Tibial artery (tissue), 4 donors: ENCODE measurements at regions of chr20 and their contacts with region 1.

Region 1: GRCh38 chr20:22453239-22454080 is 130.9 kb downstream of the FOXA2 start:
- DNase-seq: no peak
- H3K4me3 ChIP-seq: no peak overlapping the region
- H3K27ac ChIP-seq: no peak overlapping the region
- H3K4me1 ChIP-seq: no peaks in the 10 kb centered on the region
- H3K27me3 ChIP-seq: peaks cover 0 to 16% of the 10 kb centered on the region in 2 donors
- CTCF ChIP-seq: peak in 1 of 2 experiments; percentile 35

Region 2: DNA sequence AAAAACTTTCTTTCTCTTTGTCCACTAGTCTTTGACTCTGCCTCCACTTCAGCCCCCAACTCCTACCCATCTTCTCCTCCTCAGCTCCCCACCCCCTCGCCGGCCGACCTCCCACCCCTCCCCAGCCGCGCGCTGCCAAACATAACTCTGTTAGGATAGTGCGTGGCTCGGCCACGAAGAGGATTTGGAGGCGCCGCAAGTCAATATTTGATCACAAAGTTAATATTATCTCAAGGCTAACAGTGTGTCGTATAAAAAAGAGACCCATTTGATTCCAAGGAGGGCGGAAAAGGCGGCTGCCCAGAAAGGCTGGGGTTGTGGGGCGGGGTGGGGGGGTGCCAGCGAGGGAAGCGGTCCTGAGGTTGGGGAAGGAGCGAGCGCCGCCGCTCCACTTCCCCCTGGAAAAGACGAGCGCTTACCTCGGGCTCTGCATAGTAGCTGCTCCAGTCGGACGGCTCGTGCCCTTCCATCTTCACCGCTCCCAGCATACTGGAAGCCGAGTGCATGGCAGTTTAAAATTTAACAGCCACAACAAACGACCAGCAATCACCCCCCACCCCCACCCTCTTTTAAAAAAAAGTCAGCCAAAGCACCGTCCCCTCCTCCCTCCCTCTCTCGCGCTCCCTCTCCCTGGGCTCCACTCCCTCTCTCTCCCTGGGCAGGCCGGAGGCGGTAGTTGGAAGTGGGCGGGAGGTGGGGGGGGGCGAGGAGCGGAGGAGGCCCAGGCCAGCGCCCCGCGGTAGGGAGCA is 130.5 kb after region 1 on chr20:
- intact Hi-C with region 1: no loop called
- DNase-seq: no peak
- H3K4me3 ChIP-seq: peak overlapping the region; percentile 21 to 36
- H3K27ac ChIP-seq: no peak overlapping the region
- H3K4me1 ChIP-seq: peaks cover 0 to 54% (median 42%) of the 10 kb centered on the region in 4 donors
- H3K27me3 ChIP-seq: peaks cover 0 to 94% of the 10 kb centered on the region in 2 donors
- CTCF ChIP-seq: no peak

Region 3: GRCh38 chr20:22962557-22963438 is 509.3 kb after region 1 on chr20:
- intact Hi-C with region 1: loop called (anchors 10 kb)
- DNase-seq: no peak
- H3K4me3 ChIP-seq: no peak overlapping the region
- H3K27ac ChIP-seq: no peak overlapping the region
- H3K4me1 ChIP-seq: no peaks in the 10 kb centered on the region
- H3K27me3 ChIP-seq: peaks cover 0 to 12% of the 10 kb centered on the region in 2 donors
- CTCF ChIP-seq: no peak